ENCODE measurements at regions of chr11 and their contacts with region 1.

Region 1: DNA sequence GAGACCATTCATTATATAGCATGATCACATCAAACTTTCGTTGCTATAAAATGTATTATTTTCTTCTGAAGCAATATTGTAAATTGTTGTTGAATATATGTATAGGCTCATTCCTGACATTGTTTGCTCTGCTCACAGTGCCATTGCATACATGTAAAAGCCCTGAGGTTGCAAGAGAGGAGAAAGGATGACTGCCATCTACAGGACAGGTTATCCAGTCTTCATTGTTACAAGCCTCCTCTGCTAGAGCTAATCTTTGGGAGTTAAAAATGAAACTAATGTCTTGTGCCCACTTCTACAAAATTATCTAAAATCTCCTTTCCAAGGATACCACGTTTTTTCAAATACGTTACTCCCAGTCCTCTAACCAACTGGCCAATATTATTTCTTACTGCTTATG is 16.4 kb upstream of the OR5AL1 start:
- DNase-seq: no peak
- H3K4me3 ChIP-seq: no peak overlapping the region
- H3K4me3 Mint-ChIP-seq: no peak overlapping the region
- H3K27ac ChIP-seq: no peak overlapping the region
- H3K27ac Mint-ChIP-seq: no peak overlapping the region
- H3K4me1 ChIP-seq: no peaks in the 10 kb centered on the region
- H3K4me1 Mint-ChIP-seq: no peaks in the 10 kb centered on the region
- H3K27me3 ChIP-seq: no peaks in the 10 kb centered on the region
- H3K27me3 Mint-ChIP-seq: peaks cover 0 to 1% (median 0%) of the 10 kb centered on the region in 3 donors
- CTCF ChIP-seq: no peak

Region 2: GRCh38 chr11:56453521-56453920 is 57.5 kb after region 1 on chr11:
- intact Hi-C with region 1: loop called in 1 of 2 experiments (anchors 10 kb)
- DNase-seq: no peak
- H3K4me3 ChIP-seq: no peak overlapping the region
- H3K4me3 Mint-ChIP-seq: no peak overlapping the region
- H3K27ac ChIP-seq: no peak overlapping the region
- H3K27ac Mint-ChIP-seq: no peak overlapping the region
- H3K4me1 ChIP-seq: no peaks in the 10 kb centered on the region
- H3K4me1 Mint-ChIP-seq: no peaks in the 10 kb centered on the region
- H3K27me3 ChIP-seq: no peaks in the 10 kb centered on the region
- H3K27me3 Mint-ChIP-seq: no peaks in the 10 kb centered on the region
- CTCF ChIP-seq: no peak

Measured in CD14-positive monocyte (primary cell).